B cell (primary cell): ENCODE measurements at regions of chr19 and their contacts with region 1.

Region 1: GRCh38 chr19:6362027-6362350 is 658 bp downstream of the CLPP start:
- DNase-seq: no peak
- ATAC-seq: no peak
- H3K4me3 ChIP-seq: peak overlapping the region in 4 of 5 experiments; percentile 60 to 72 (median 66)
- H3K4me3 Mint-ChIP-seq: peak overlapping the region; percentile 94
- H3K27ac ChIP-seq: peak overlapping the region; percentile 60 to 79
- H3K27ac Mint-ChIP-seq: peak overlapping the region; percentile 92
- H3K4me1 ChIP-seq: peaks cover 6 to 12% of the 10 kb centered on the region in 2 donors
- H3K4me1 Mint-ChIP-seq: peaks cover 14% of the 10 kb centered on the region
- H3K27me3 ChIP-seq: no peaks in the 10 kb centered on the region
- H3K27me3 Mint-ChIP-seq: no peaks in the 10 kb centered on the region
- CTCF ChIP-seq: no peak

Region 2: DNA sequence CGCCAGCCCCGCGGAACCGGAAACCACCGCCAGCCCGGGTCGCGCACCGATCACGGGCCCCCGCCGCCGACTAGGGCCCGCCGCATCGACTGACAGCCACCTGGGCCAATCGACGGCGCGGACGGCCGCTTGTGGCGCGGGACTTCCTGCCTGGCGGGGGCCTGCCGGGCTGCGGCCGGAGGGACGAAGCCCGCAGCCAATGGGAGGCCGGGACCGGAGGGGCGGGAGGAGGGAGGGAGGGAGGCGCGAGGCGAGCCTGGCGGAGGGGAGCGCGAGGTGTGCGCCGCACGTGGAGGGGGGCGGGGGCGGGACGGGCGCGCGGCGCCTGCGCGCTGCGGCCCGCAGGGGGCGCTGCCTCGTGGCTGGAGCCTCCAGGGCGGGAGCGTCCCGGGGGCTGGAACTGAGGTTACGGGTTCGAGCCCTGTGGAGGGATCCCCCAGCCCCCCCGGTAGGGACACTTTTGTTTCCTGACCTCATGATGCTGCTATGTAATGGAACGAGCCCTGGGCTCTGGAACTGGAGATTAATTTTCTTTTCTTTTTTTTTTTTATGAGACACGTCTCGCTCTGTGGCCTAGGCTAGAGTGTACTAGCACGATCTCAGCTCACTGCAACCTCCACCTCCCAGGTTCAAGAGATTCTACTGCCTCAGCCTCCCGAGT is 81.9 kb before region 1 on chr19 and contains the start of gene MLLT1:
- CTCF ChIA-PET with region 1: no interaction called
- POLR2A ChIA-PET with region 1: no interaction called
- intact Hi-C with region 1: loop called (anchors 1 kb)
- DNase-seq: peak; percentile 97
- ATAC-seq: peak; percentile 97
- H3K4me3 ChIP-seq: peak within 1 kb of the TSS; percentile 44 to 85 (median 62)
- H3K4me3 Mint-ChIP-seq: peak within 1 kb of the TSS; percentile 89
- H3K27ac ChIP-seq: peak within 1 kb of the TSS; percentile 29 to 77
- H3K27ac Mint-ChIP-seq: peak within 1 kb of the TSS; percentile 64
- H3K4me1 ChIP-seq: peaks cover 15 to 23% of the 10 kb centered on the region in 2 donors
- H3K4me1 Mint-ChIP-seq: peaks cover 27% of the 10 kb centered on the region
- H3K27me3 ChIP-seq: no peaks in the 10 kb centered on the region
- H3K27me3 Mint-ChIP-seq: no peaks in the 10 kb centered on the region
- CTCF ChIP-seq: peak; percentile 90
- total RNA-seq, gene MLLT1: 40.2 and 45.7 TPM in 2 replicates

Region 3: GRCh38 chr19:6393074-6393983 is 31.3 kb after region 1 on chr19 and contains the start of gene GTF2F1:
- CTCF ChIA-PET with region 1: interaction called, 3 read pairs
- POLR2A ChIA-PET with region 1: no interaction called
- intact Hi-C with region 1: loop called (anchors 1 kb)
- DNase-seq: peak; percentile 98
- ATAC-seq: peak; percentile 82
- H3K4me3 ChIP-seq: peak within 1 kb of the TSS; percentile 70 to 91 (median 83)
- H3K4me3 Mint-ChIP-seq: peak within 1 kb of the TSS; percentile 95
- H3K27ac ChIP-seq: peak within 1 kb of the TSS; percentile 73 to 95
- H3K27ac Mint-ChIP-seq: peak within 1 kb of the TSS; percentile 97
- H3K4me1 ChIP-seq: peaks cover 15 to 16% of the 10 kb centered on the region in 2 donors
- H3K4me1 Mint-ChIP-seq: peaks cover 26% of the 10 kb centered on the region
- H3K27me3 ChIP-seq: no peaks in the 10 kb centered on the region
- H3K27me3 Mint-ChIP-seq: no peaks in the 10 kb centered on the region
- CTCF ChIP-seq: no peak
- total RNA-seq, gene GTF2F1: 56.5 and 63.4 TPM in 2 replicates

Region 4: GRCh38 chr19:6450166-6450565 is 88.2 kb after region 1 on chr19:
- CTCF ChIA-PET with region 1: no interaction called
- POLR2A ChIA-PET with region 1: no interaction called
- intact Hi-C with region 1: no loop called
- DNase-seq: no peak
- ATAC-seq: no peak
- H3K4me3 ChIP-seq: no peak overlapping the region
- H3K4me3 Mint-ChIP-seq: no peak overlapping the region
- H3K27ac ChIP-seq: no peak overlapping the region
- H3K27ac Mint-ChIP-seq: no peak overlapping the region
- H3K4me1 ChIP-seq: no peaks in the 10 kb centered on the region
- H3K4me1 Mint-ChIP-seq: no peaks in the 10 kb centered on the region
- H3K27me3 ChIP-seq: no peaks in the 10 kb centered on the region
- H3K27me3 Mint-ChIP-seq: no peaks in the 10 kb centered on the region
- CTCF ChIP-seq: no peak